ENCODE measurements at regions of chrX and their contacts with region 1.

Region 1: GRCh38 chrX:138711399-138712347 is at the start of gene FGF13:
- DNase-seq: peak; percentile 71
- H3K4me3 ChIP-seq: peak within 1 kb of the TSS; percentile 52
- H3K27ac ChIP-seq: no peak within 1 kb of the TSS
- H3K4me1 ChIP-seq: no peaks in the 10 kb centered on the region
- H3K27me3 ChIP-seq: no peaks in the 10 kb centered on the region
- CTCF ChIP-seq: peak; percentile 63
- total RNA-seq, gene FGF13: 36.5 and 38.7 TPM in 2 replicates

Region 2: GRCh38 chrX:138298259-138298658 is 413.4 kb before region 1 on chrX:
- CTCF ChIA-PET with region 1: no interaction called
- POLR2A ChIA-PET with region 1: no interaction called
- intact Hi-C with region 1: loop called (anchors 10 kb)
- DNase-seq: peak; percentile 2
- H3K4me3 ChIP-seq: no peak overlapping the region
- H3K27ac ChIP-seq: no peak overlapping the region
- H3K4me1 ChIP-seq: no peaks in the 10 kb centered on the region
- H3K27me3 ChIP-seq: no peaks in the 10 kb centered on the region
- CTCF ChIP-seq: peak; percentile 43; the same call in 1 of the 2 replicates

Measured in A673 (cell line).